PC-3 (cell line): ENCODE measurements at regions of chr5 and their contacts with region 1.

Region 1: GRCh38 chr5:65102828-65103711 is 334.3 kb downstream of the CWC27 start:
- DNase-seq: peak; percentile 41
- ATAC-seq: peak; percentile 48
- H3K4me3 ChIP-seq: peak overlapping the region; percentile 65
- H3K27ac ChIP-seq: no peak overlapping the region
- H3K4me1 ChIP-seq: peaks cover 5% of the 10 kb centered on the region; the same call in 1 of the 2 replicates
- H3K27me3 ChIP-seq: no peaks in the 10 kb centered on the region
- CTCF ChIP-seq: 0 out of 2 replicates have a peak, but pooled peaks have one; percentile 17

Region 2: DNA sequence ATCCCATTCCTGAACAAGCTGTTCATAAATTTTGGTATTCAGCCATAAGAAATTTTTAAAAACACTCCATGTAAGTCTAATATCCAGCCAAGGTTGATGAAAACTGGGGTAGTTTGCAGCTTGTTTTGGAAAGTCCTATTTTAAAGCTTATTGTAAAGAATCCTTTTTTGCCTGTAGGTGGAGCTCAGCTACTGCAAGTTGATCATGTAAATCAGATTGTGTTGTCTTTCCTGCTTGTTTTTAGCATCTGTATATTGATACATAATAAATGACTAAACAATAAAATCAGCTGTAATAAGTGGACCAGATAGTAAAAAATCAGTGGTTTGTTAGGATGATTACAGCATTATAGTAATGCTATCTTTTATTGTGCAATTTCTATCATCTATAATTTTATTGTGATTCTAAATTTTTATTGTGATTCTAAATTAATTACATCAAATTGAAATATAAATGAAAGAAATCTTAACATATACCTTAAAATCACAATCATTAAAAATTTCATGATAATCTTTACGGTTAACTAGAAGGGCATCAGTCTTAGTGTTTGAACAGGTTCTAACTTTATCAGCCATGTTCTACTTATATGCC is 291.9 kb before region 1 on chr5:
- CTCF ChIA-PET with region 1: no interaction called
- POLR2A ChIA-PET with region 1: no interaction called
- intact Hi-C with region 1: loop called (anchors 5 kb)
- DNase-seq: peak; percentile 48
- ATAC-seq: peak; percentile 53
- H3K4me3 ChIP-seq: no peak overlapping the region
- H3K27ac ChIP-seq: no peak overlapping the region
- H3K4me1 ChIP-seq: no peaks in the 10 kb centered on the region
- H3K27me3 ChIP-seq: no peaks in the 10 kb centered on the region
- CTCF ChIP-seq: peak; percentile 75

Region 3: DNA sequence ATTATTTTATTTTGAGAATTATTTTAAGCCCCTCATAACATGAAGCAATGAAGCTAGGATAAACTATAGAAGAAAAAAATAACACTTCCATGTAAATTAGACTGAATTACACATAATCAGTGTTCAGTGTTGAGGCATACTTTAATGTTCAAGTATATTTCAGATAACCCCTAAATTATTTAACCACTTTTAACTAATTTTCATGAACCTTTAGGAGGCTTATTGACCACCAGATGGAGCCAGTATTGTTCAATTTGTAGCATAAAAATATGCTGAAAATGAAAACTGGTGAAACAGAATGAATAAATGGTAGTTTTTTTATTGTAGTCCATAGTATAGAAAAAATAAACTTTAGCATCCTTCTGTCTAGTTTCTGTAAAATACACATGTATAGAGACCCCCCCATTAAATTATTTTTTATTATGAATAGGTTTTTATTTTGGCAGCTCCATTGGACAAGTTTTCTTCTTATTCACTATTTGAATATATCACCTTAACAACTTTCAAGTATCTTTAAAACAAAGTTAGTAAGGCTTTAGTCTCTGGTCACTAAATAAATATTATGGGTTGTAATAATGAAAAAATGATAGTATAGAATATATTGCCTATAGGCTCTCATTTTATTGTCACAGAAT is 144.2 kb before region 1 on chr5:
- CTCF ChIA-PET with region 1: no interaction called
- POLR2A ChIA-PET with region 1: no interaction called
- intact Hi-C with region 1: loop called (anchors 10 kb)
- DNase-seq: peak; percentile 49
- ATAC-seq: no peak
- H3K4me3 ChIP-seq: no peak overlapping the region
- H3K27ac ChIP-seq: no peak overlapping the region
- H3K4me1 ChIP-seq: no peaks in the 10 kb centered on the region
- H3K27me3 ChIP-seq: no peaks in the 10 kb centered on the region
- CTCF ChIP-seq: peak; percentile 67

Region 4: DNA sequence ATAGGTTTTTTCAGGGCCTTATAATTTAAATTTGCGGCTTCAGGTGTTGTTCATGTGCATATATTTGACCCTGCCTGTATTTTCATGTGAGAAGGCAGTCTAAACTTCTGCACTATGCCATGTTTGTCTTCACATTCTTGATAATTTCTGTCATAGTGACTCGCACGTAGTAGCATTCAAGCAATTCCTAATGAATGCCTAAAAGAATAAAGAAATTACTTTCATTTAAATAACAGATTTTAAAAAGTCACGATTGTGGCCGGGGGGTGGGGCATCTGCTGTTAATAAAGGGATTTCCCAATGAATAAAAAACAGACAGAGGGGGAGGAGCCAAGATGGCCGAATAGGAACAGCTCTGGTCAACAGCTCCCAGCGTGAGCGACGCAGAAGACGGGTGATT is 60.6 kb after region 1 on chr5:
- CTCF ChIA-PET with region 1: no interaction called
- POLR2A ChIA-PET with region 1: no interaction called
- intact Hi-C with region 1: loop called (anchors 5 kb)
- DNase-seq: peak; percentile 60
- ATAC-seq: peak; percentile 57
- H3K4me3 ChIP-seq: no peak overlapping the region
- H3K27ac ChIP-seq: no peak overlapping the region
- H3K4me1 ChIP-seq: peaks cover 30% of the 10 kb centered on the region
- H3K27me3 ChIP-seq: no peaks in the 10 kb centered on the region
- CTCF ChIP-seq: no peak

Region 5: DNA sequence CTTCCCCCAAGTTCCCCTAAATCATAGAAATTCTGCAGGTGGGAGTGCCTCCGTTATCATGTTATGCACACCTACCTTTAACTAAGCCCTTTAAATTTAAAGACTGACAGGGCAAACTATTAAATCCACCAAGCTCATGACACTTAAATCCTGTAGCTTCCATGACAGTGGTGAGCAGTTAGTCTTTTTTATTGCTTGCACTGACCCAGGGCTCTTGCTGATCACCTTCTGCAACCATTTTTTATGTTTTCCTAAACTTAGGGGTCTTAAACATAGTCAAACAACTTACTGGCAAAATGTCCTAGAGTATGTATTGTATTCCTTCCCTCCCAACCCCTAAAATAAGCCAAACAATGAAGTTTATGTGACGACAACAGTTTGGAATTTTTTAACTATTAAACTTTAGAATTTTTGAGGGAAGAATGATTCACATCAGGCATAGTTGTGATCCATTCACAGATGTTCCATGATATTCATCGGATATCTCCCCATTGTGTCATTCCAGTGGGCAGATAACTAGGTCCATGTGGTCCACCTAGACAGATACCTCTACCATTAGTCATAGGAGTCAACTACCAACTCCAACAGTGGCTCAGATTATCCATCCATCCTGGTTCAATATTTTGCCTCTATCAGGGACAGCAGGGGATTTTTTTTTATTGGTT is 95.5 kb after region 1 on chr5:
- CTCF ChIA-PET with region 1: no interaction called
- POLR2A ChIA-PET with region 1: no interaction called
- intact Hi-C with region 1: loop called (anchors 5 kb)
- DNase-seq: peak; percentile 92
- ATAC-seq: peak; percentile 93
- H3K4me3 ChIP-seq: peak overlapping the region; percentile 43
- H3K27ac ChIP-seq: peak overlapping the region; percentile 74
- H3K4me1 ChIP-seq: peaks cover 51% of the 10 kb centered on the region
- H3K27me3 ChIP-seq: no peaks in the 10 kb centered on the region
- CTCF ChIP-seq: no peak

Region 6: DNA sequence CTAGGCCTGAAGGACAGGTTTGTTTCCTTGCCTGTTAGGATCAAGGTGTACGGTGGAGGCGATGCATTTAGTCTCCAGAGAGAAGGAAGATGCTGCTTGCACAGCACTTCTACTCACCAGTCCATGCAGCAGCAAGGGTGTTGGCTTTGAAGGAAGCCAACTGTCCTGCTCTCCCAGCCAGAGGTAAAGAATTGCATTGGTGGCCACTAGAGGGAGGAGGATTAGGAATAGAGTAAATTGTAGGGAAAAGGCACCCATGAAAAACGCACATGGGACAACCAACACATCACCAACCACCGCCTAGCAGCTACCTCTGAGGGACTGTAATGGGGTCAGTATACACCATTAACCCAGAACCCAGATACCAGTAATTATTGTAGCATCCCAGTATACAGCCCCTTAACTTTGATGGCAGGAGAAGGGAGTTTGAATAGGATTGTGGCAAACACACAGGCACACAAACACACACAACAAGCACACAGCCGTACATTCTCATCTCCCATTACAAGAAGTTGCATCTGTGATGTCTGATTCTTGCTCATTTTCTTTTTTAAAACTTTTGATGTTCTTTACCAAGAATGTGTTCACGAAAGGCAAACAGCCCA is 111.0 kb after region 1 on chr5:
- CTCF ChIA-PET with region 1: no interaction called
- POLR2A ChIA-PET with region 1: no interaction called
- intact Hi-C with region 1: loop called (anchors 5 kb)
- DNase-seq: peak; percentile 45
- ATAC-seq: peak; percentile 29; the same call in 1 of the 2 replicates
- H3K4me3 ChIP-seq: no peak overlapping the region
- H3K27ac ChIP-seq: no peak overlapping the region
- H3K4me1 ChIP-seq: peaks cover 25% of the 10 kb centered on the region
- H3K27me3 ChIP-seq: no peaks in the 10 kb centered on the region
- CTCF ChIP-seq: peak; percentile 58

Region 7: GRCh38 chr5:65481635-65482295 is 378.7 kb after region 1 on chr5 and contains the start of gene ADAMTS6:
- CTCF ChIA-PET with region 1: no interaction called
- POLR2A ChIA-PET with region 1: no interaction called
- intact Hi-C with region 1: loop called (anchors 2 kb)
- DNase-seq: peak; percentile 59
- ATAC-seq: peak; percentile 65
- H3K4me3 ChIP-seq: peak within 1 kb of the TSS; percentile 79
- H3K27ac ChIP-seq: peak within 1 kb of the TSS; percentile 48
- H3K4me1 ChIP-seq: peaks cover 7% of the 10 kb centered on the region; the same call in 1 of the 2 replicates
- H3K27me3 ChIP-seq: no peaks in the 10 kb centered on the region
- CTCF ChIP-seq: no peak
- total RNA-seq, gene ADAMTS6: 1.5 and 1.7 TPM in 2 replicates